Left colon (tissue), 2 donors: ENCODE measurements at regions of chr1 and their contacts with region 1.

Region 1: DNA sequence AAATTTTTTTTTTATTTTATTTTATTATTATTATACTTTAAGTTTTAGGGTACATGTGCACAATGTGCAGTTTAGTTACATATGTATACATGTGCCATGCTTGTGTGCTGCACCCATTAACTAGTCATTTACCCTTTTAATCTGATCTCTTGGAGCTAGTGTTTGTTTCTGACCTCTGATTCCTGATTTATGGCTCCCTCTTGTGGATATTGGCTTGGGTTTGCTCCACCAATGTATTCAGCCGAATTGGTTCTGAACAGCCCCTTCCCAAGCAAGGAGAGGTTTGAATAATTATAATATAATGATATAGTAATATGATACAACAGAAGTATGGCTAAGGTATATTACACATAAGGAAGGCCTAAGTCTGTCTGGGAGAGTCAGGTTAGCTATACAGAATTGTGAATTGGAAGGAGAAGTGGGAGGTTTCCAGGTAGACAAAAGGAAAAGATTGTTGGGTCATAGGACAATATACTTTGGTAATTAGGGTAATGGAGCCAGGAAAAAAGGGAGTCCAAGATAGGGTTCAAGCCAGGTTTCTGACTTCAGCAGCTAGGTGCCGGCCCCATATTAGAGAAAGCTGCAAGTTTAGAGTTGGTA is 53.1 kb upstream of the HMCN1 start:
- DNase-seq: no peak
- ATAC-seq: peak; percentile 77

Region 2: DNA sequence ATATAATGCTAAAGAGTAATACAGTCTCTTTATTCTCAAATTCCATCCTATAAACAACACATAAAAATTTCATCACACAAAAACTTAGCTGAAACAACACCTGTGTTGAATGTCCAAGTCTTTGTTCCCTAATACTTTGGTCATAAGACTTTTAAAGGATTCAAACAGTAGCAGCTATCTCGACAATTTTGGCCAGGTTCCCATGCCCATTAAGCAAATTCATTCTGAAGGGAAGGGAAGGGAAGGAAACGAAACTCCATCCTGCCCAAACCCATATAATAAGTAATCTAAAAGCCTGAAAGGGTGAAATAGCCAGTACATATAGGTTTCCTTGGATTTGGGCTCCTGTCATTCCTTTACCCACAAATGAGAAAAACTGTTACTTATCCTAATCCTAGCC is 371.6 kb before region 1 on chr1:
- intact Hi-C with region 1: loop called in 1 of 2 experiments (anchors 10 kb)
- DNase-seq: no peak
- ATAC-seq: no peak

Region 3: DNA sequence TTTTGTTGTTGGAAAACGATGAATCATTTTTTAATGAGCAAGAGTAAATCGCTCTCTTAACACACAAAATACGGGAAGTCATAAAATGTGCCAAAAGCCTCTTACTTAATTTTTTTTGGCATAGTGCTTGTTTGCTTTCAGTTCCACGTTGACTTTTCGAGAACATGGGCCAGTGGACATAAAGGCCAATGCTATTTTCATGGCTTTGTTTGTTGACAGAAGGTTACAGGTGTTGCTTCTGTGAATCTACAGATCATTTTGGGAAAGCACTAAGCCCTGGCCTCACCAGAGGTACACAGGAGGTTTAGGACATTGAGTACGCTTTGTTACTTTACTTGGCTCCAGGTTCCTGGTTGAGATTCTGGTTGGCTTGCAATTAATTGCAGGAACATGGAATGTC is 146.3 kb before region 1 on chr1:
- intact Hi-C with region 1: no loop called
- DNase-seq: no peak
- ATAC-seq: peak; percentile 40